Activated CD8-positive, alpha-beta memory T cell treated with anti-CD3 and anti-CD28 coated beads, Interleukin-2, amount 10 ng/mL, durations not matched to agents 7 days and 5 days (primary cell): ENCODE measurements at regions of chr17 and their contacts with region 1.

Region 1: GRCh38 chr17:69607162-69607834 is 192.8 kb downstream of the MAP2K6 start:
- DNase-seq: peak; percentile 66
- ATAC-seq: peak; percentile 80
- H3K4me3 Mint-ChIP-seq: no peak overlapping the region
- H3K27ac Mint-ChIP-seq: peak overlapping the region; percentile 39
- H3K4me1 Mint-ChIP-seq: peaks cover 29% of the 10 kb centered on the region
- H3K27me3 Mint-ChIP-seq: no peaks in the 10 kb centered on the region

Region 2: GRCh38 chr17:69581061-69581961 is 26.0 kb before region 1 on chr17:
- CTCF ChIA-PET with region 1: interaction called, 15 read pairs
- DNase-seq: peak; percentile 49
- ATAC-seq: peak; percentile 67
- H3K4me3 Mint-ChIP-seq: peak overlapping the region; percentile 67
- H3K27ac Mint-ChIP-seq: no peak overlapping the region
- H3K4me1 Mint-ChIP-seq: peaks cover 13% of the 10 kb centered on the region
- H3K27me3 Mint-ChIP-seq: peaks cover 37% of the 10 kb centered on the region